HepG2 (cell line): ENCODE measurements at regions of chr2 and their contacts with region 1.

Region 1: DNA sequence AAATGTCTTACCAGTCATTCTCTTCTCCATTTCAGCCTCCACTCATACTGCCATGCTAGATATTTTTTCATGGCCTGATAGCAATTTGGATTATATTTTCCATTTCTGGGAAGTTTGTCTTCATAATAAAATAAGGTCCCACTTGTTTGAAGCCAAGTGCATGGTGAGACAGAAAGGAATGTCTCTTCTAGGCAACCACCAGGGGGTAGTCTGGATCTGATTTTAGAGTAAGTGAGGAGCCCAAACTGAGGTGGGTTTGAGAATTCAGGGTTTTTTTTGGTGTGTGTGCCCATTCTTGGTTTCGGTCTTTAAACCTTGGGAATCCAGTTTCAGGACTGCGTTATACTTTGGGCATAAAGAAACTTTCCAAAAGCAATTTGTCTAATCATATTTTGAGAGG is 315.5 kb downstream of the RPRM start:
- DNase-seq: peak; percentile 76
- ATAC-seq: peak; percentile 91
- H3K4me3 ChIP-seq: no peak overlapping the region
- H3K27ac ChIP-seq: no peak overlapping the region
- H3K4me1 ChIP-seq: no peaks in the 10 kb centered on the region
- H3K27me3 ChIP-seq: no peaks in the 10 kb centered on the region
- CTCF ChIP-seq: peak; percentile 79
- EP300 ChIP-seq: no peak
- POLR2A ChIP-seq: no peak
- RAD21 ChIP-seq: peak; percentile 60

Region 2: DNA sequence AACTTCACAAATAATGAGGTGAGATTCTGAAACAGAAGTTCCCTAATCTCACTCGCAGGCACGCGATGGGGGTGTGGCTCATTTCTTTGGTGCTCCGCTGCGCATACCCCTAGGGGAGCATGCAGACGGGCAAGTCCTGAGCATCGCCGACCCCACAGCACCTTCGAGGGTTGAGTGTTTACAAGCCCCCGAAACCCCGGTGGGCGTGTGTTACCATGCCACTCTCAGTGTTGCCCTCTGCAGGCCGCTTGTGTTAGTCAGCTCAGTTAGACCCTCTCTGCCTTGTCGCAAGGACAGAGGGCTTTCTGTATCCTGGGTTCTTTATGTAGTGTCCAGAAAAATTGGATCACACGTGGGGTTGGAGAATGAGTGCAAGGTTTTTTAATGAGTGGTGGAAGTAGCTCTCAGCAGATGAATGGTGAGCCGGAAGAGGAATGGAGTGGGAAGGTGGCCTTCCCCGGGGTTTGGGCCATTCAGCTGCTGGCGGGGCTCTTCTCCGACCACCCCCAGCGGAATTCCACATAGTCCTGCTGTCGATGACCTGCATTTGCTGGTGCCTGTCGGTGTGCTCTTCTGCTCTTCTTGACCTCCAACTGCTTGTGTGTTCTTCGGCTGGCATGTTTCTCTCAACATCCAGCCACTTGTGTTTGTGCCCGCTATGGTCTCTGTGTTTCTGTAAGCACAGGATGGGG is 124.2 kb after region 1 on chr2:
- CTCF ChIA-PET with region 1: interaction called, 3 read pairs
- POLR2A ChIA-PET with region 1: no interaction called
- in situ Hi-C with region 1: no loop called
- intact Hi-C with region 1: loop called (anchors 1 kb)
- DNase-seq: peak; percentile 48
- ATAC-seq: peak; percentile 99
- H3K4me3 ChIP-seq: peak overlapping the region in 1 of 3 experiments; percentile 57; a peak in 1 of 6 replicates
- H3K27ac ChIP-seq: no peak overlapping the region
- H3K4me1 ChIP-seq: peaks cover 7% of the 10 kb centered on the region
- H3K27me3 ChIP-seq: no peaks in the 10 kb centered on the region
- CTCF ChIP-seq: peak; percentile 78
- EP300 ChIP-seq: no peak
- POLR2A ChIP-seq: no peak
- RAD21 ChIP-seq: peak; percentile 19; the same call in 1 of the 2 replicates

Region 3: DNA sequence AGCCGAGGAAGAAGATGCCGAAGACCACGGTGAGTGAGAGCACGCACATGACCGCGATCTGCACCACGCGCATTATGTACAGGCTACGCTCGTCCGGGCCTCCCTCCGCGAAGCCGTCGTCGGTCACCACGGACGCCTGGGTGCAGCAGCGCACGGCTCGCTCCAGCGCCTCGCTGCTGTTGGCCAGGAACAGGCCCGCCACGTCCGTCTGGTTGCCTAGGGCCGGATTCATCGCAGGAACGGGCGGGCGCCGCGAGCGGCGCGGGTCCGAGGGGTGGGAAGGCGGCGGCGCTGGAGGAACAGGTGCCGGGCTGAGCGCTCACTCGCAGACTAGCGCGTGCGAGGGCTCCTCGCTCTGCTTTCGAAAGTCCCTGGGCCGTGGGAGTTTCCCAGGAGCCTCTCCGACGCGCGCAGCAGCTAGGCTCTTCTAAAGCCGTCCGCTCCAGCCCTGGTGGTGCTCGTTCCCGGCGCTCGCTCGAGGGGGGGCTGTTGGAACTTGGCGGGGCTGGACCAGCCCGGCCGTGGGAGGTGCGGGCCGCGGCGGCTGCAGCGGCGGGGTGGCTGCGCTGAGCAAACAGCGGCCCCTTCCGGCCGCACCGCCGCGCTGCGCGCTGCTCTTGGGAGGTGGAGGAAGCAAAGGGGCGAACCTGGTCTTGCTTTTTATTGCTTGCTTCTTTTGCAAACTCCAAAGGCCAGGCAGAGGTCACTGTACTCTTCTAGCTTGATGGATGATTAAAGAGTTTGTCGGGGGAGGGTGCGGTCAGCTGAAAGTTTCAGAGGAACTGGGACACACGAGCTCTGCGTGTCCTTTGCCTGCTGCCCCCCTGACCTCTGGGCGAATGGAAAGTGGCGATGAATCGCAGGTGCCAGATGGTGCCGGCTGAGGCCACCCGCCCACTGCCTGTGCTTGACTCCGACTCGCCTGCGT is 315.5 kb after region 1 on chr2 and contains the start of gene RPRM:
- CTCF ChIA-PET with region 1: interaction called, 20 read pairs
- POLR2A ChIA-PET with region 1: no interaction called
- in situ Hi-C with region 1: loop called (anchors 5 kb)
- intact Hi-C with region 1: loop called (anchors 1 kb)
- DNase-seq: peak; percentile 35
- ATAC-seq: peak; percentile 98
- H3K4me3 ChIP-seq: peak within 1 kb of the TSS; percentile 19 to 63 (median 39); a peak in 4 of 6 replicates
- H3K27ac ChIP-seq: no peak within 1 kb of the TSS
- H3K4me1 ChIP-seq: peaks cover 16% of the 10 kb centered on the region
- H3K27me3 ChIP-seq: peaks cover 6 to 43% of the 10 kb centered on the region in 2 experiments; a peak in 4 of 5 replicates
- CTCF ChIP-seq: peak; percentile 85
- EP300 ChIP-seq: no peak
- POLR2A ChIP-seq: no peak
- RAD21 ChIP-seq: peak; percentile 94
- total RNA-seq, gene RPRM: not detected in 2 replicates

Region 4: DNA sequence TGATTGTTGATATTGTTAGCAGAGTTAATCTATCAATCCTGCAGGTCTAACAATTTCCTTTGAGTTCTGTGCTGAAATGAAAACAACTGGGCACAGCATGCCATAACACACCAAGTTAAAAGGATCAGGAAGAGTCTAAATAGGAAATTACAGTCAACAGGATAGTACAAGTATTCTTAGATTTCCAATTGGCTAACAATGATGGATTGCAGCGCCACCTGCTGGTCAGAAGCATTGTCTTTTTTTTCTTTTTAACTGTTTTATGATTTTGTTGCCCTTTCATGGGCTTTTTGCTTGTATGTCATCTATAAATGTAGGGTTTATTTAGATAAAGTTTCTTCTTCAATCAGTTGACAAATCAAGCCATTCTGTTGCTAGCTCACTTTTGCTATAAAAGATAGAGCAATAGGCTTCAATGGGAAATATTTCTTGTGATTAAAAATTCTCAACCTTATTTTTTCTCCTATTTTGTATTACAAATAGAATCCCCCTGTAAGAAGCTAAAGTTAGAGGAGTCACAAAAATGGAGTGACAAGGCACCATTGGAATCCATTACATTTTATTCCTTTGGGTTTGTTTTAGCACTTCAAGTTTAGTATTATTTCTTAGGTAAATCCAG is 356.3 kb after region 1 on chr2:
- CTCF ChIA-PET with region 1: interaction called, 31 read pairs
- POLR2A ChIA-PET with region 1: no interaction called
- in situ Hi-C with region 1: loop called (anchors 5 kb)
- intact Hi-C with region 1: no loop called
- DNase-seq: peak; percentile 50
- ATAC-seq: peak; percentile 45; the same call in 2 of the 3 replicates
- H3K4me3 ChIP-seq: no peak overlapping the region
- H3K27ac ChIP-seq: no peak overlapping the region
- H3K4me1 ChIP-seq: no peaks in the 10 kb centered on the region
- H3K27me3 ChIP-seq: no peaks in the 10 kb centered on the region; a peak in 1 of 5 replicates
- CTCF ChIP-seq: peak; percentile 79
- EP300 ChIP-seq: no peak
- POLR2A ChIP-seq: no peak
- RAD21 ChIP-seq: no peak

Region 5: GRCh38 chr2:153622285-153622684 is 459.2 kb after region 1 on chr2:
- CTCF ChIA-PET with region 1: no interaction called
- POLR2A ChIA-PET with region 1: no interaction called
- in situ Hi-C with region 1: no loop called
- intact Hi-C with region 1: loop called (anchors 5 kb)
- DNase-seq: peak; percentile 3
- ATAC-seq: no peak
- H3K4me3 ChIP-seq: no peak overlapping the region
- H3K27ac ChIP-seq: no peak overlapping the region
- H3K4me1 ChIP-seq: no peaks in the 10 kb centered on the region
- H3K27me3 ChIP-seq: no peaks in the 10 kb centered on the region
- CTCF ChIP-seq: peak; percentile 53
- EP300 ChIP-seq: no peak
- POLR2A ChIP-seq: no peak
- RAD21 ChIP-seq: no peak

Region 6: GRCh38 chr2:154375579-154375931 is 1212.5 kb after region 1 on chr2:
- CTCF ChIA-PET with region 1: interaction called, 5 read pairs
- POLR2A ChIA-PET with region 1: no interaction called
- in situ Hi-C with region 1: loop called (anchors 25 kb)
- intact Hi-C with region 1: loop called (anchors 1 kb)
- DNase-seq: peak; percentile 54
- ATAC-seq: peak; percentile 90
- H3K4me3 ChIP-seq: no peak overlapping the region
- H3K27ac ChIP-seq: no peak overlapping the region
- H3K4me1 ChIP-seq: no peaks in the 10 kb centered on the region
- H3K27me3 ChIP-seq: 0 out of 5 replicates have a peak, but pooled peaks cover 0 to 3% of the 10 kb centered on the region in 2 experiments
- CTCF ChIP-seq: peak; percentile 71
- EP300 ChIP-seq: no peak
- POLR2A ChIP-seq: no peak
- RAD21 ChIP-seq: no peak